ENCODE measurements at regions of chr3 and their contacts with region 1.

Region 1: GRCh38 chr3:142279965-142280590 is 54.7 kb upstream of the GK5 start:
- DNase-seq: peak; percentile 85
- H3K4me3 ChIP-seq: no peak overlapping the region
- H3K27ac ChIP-seq: no peak overlapping the region
- H3K4me1 ChIP-seq: no peaks in the 10 kb centered on the region
- CTCF ChIP-seq: peak; percentile 84

Region 2: GRCh38 chr3:141460097-141460704 is 819.9 kb before region 1 on chr3:
- CTCF ChIA-PET with region 1: no interaction called
- POLR2A ChIA-PET with region 1: no interaction called
- intact Hi-C with region 1: loop called (anchors 10 kb)
- DNase-seq: peak; percentile 77
- H3K4me3 ChIP-seq: no peak overlapping the region
- H3K27ac ChIP-seq: no peak overlapping the region
- H3K4me1 ChIP-seq: no peaks in the 10 kb centered on the region
- CTCF ChIP-seq: peak; percentile 88

Region 3: GRCh38 chr3:141940204-141940776 is 339.8 kb before region 1 on chr3:
- CTCF ChIA-PET with region 1: no interaction called
- POLR2A ChIA-PET with region 1: no interaction called
- intact Hi-C with region 1: loop called (anchors 5 kb)
- DNase-seq: peak; percentile 39
- H3K4me3 ChIP-seq: no peak overlapping the region
- H3K27ac ChIP-seq: no peak overlapping the region
- H3K4me1 ChIP-seq: no peaks in the 10 kb centered on the region
- CTCF ChIP-seq: peak; percentile 49

Region 4: DNA sequence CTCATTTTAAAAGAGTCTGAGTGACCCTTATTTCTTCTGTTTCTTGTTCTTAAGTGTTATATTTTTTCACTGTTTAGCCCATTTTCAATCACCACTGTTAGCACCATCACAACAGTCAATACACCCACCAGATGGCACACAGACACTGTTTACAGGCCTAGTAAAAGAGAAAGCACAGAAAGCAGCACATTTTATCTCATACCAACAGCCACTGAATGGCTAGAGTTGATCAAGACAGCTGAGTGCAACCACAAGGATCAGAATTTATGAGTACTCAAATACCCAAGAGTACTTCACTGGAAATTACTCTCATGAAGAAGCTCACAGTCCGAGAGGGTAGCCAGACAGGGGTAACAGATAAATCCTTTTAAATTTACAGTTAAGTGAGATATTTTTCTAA is 257.7 kb before region 1 on chr3:
- CTCF ChIA-PET with region 1: no interaction called
- POLR2A ChIA-PET with region 1: no interaction called
- intact Hi-C with region 1: loop called (anchors 2 kb)
- DNase-seq: peak; percentile 79
- H3K4me3 ChIP-seq: peak overlapping the region; percentile 33
- H3K27ac ChIP-seq: peak overlapping the region; percentile 65
- H3K4me1 ChIP-seq: peaks cover 67% of the 10 kb centered on the region
- CTCF ChIP-seq: peak; percentile 81

Region 5: GRCh38 chr3:142180761-142181362 is 99.2 kb before region 1 on chr3:
- CTCF ChIA-PET with region 1: no interaction called
- POLR2A ChIA-PET with region 1: interaction called, 4 read pairs
- intact Hi-C with region 1: loop called (anchors 10 kb)
- DNase-seq: peak; percentile 57
- H3K4me3 ChIP-seq: no peak overlapping the region
- H3K27ac ChIP-seq: no peak overlapping the region
- H3K4me1 ChIP-seq: no peaks in the 10 kb centered on the region
- CTCF ChIP-seq: peak; percentile 87

Region 6: DNA sequence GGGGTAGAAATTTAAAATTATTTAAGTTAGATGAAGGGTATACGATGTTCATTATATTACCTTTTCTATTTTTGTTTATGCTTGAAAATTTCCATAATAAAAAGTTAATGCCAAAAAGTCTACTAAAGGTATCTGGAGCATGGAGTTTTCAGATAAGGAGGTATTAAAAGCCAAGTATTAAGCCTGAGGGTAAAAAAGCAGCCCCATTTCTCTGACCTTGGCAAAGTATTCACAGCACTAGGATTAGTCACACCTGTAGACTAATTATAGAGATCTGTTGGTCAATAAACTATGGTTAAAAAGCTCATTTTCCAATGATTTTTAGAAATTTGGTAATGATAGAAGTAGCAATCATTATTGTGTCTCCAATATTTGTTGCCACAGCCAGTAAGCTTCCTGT is 144.7 kb after region 1 on chr3:
- CTCF ChIA-PET with region 1: no interaction called
- POLR2A ChIA-PET with region 1: no interaction called
- intact Hi-C with region 1: no loop called
- DNase-seq: no peak
- H3K4me3 ChIP-seq: no peak overlapping the region
- H3K27ac ChIP-seq: no peak overlapping the region
- H3K4me1 ChIP-seq: no peaks in the 10 kb centered on the region
- CTCF ChIP-seq: no peak

Measured in OCI-LY7 (cell line).